ENCODE measurements at regions of chr15 and their contacts with region 1.

Region 1: DNA sequence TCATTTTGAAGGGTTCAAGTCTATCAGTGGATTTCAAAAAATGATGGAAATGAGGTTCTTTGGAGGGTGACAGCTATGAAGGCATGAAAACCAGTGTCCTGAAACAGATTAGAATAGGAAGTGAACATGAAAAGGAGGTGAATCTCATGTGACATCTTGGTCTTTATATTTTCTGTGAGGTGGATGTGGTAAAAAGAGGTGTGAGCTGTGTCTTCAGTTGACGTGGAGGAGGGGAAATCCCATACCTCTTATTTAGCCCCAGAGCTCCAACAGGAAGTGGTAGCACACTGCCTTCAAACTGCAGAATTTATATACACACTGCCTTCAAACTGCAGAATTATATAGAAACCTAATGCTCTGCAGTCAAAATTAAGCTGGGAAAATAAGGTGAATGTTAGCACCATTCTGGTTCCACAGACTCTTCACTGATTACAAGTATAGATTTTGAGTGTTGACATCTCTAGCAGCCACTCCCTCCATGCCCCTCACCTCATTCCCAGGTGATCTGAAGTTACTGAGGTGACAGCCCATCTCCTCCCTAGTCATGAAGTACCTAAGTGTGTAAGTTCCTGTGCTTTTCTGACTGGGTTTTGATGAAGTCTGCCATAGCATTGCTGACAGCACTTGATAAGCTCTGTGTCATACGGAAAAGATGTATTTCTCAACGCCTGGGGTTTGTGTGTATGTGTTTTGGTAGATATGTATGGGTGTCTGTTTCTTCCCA is 2.7 kb downstream of the RAB8B start:
- H3K4me3 Mint-ChIP-seq: peak overlapping the region; percentile 23
- H3K27ac Mint-ChIP-seq: peak overlapping the region; percentile 90
- H3K4me1 Mint-ChIP-seq: peaks cover 56% of the 10 kb centered on the region
- H3K27me3 Mint-ChIP-seq: no peaks in the 10 kb centered on the region

Region 2: DNA sequence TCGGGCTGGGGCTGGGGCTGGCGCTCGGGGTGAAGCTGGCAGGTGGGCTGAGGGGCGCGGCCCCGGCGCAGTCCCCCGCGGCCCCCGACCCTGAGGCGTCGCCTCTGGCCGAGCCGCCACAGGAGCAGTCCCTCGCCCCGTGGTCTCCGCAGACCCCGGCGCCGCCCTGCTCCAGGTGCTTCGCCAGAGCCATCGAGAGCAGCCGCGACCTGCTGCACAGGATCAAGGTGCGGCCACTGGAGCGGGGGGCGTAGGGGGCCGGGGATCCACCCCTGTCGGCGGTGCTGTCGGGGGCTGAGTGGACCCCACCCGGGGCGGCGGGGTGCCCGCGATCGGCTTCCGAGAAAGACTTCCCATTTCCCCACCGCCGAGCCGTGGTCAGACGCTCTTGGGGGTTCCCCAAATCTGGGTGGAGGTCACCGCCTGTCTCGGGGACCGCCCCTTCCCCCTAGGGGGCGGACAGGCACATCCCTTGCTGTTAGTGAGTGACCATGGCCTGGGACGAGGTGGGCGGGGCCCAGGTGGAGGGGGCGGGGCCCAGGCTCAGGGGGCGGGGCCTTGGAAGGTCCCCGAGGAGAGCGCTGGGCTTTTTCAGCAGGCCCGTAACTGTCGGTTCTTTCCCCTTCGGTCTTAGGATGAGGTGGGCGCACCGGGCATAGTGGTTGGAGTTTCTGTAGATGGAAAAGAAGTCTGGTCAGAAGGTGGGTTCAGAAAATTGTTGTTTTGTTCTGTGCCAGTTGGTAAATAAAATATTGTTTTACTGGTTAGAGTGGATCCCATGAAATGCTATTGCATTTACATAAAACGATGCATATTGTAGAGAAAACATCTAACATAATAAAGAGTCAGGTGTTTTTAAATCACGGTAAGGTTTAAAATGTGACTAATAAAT is 69.8 kb before region 1 on chr15:
- intact Hi-C with region 1: loop called (anchors 2 kb)
- H3K4me3 Mint-ChIP-seq: peak overlapping the region; percentile 80
- H3K27ac Mint-ChIP-seq: peak overlapping the region; percentile 83
- H3K4me1 Mint-ChIP-seq: peaks cover 35% of the 10 kb centered on the region
- H3K27me3 Mint-ChIP-seq: no peaks in the 10 kb centered on the region

Region 3: GRCh38 chr15:63157118-63157843 is 34.8 kb before region 1 on chr15 and contains the start of gene RPS27L:
- intact Hi-C with region 1: loop called (anchors 5 kb)
- H3K4me3 Mint-ChIP-seq: peak within 1 kb of the TSS; percentile 94
- H3K27ac Mint-ChIP-seq: peak within 1 kb of the TSS; percentile 96
- H3K4me1 Mint-ChIP-seq: peaks cover 10% of the 10 kb centered on the region
- H3K27me3 Mint-ChIP-seq: no peaks in the 10 kb centered on the region

Region 4: DNA sequence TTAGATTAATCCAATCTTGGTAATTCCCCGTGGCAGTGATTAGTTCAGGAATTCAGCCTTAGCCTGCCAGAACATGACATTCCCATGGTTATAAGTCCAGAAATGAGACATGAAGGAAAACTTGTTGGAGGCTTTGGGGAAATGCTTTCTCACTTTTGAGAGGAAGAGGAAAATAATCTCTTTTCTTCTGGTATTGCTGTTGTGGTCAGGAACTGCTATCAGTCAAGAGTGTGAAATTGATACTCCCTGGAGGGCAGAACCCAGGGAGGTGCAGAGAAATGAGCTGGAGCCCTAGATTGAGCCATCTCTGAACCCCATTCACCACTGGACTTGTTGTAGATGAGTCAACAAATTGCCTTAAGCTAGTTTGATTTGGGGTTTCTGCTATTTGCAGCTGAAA is 46.7 kb after region 1 on chr15:
- intact Hi-C with region 1: loop called (anchors 5 kb)
- H3K4me3 Mint-ChIP-seq: no peak overlapping the region
- H3K27ac Mint-ChIP-seq: no peak overlapping the region
- H3K4me1 Mint-ChIP-seq: peaks cover 52% of the 10 kb centered on the region
- H3K27me3 Mint-ChIP-seq: no peaks in the 10 kb centered on the region

Region 5: DNA sequence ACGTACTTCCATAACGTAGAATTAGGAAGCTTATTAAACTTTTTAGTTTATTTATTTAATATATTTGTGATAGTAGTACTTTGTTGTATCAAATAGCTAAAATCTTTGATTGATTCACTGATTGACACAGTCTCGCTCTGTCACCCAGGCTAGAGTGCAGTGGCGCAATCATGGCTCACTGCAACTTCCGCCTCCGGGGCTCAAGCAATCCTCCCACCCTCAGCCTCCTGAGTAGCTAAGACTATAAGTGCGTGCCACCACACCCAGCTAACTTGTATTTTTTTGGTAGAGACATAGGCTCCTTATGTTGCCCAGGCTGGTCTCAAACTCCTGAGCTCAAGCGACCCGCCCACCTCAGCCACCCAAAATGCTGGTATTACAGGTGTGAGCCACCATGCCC is 91.1 kb after region 1 on chr15:
- intact Hi-C with region 1: loop called (anchors 5 kb)
- H3K4me3 Mint-ChIP-seq: no peak overlapping the region
- H3K27ac Mint-ChIP-seq: peak overlapping the region; percentile 92
- H3K4me1 Mint-ChIP-seq: peaks cover 36% of the 10 kb centered on the region
- H3K27me3 Mint-ChIP-seq: no peaks in the 10 kb centered on the region

Region 6: DNA sequence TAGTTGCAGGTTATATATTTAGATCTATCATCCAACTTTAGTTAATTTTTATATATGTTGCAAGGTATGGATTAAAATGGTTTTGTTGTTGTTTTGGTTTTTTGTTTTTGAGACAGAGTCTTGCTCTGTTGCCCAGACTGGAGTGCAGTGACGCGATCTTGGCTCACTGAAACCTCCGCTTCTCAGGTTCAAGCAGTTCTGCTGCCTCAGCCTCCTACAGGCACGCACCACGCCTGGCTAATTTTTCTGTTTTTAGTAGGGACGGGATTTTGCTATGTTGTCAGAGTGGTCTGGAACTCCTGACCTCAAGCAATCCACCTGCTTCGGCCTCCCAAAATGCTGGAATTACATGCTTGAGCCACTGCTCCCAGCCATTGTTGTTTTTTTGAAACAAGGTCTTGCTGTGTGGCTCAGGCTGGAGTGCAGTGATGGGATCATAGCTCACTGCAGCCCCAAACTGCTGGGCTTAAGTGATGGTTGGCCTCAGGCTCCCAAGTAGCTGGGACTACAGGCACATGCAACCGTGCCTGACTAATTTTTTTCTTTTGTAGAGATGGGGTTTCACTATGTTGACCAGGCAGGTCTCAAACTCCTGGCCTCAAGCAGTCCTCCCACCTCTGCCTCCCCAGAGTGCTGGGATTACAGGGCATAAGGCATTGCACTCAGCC is 1360.4 kb after region 1 on chr15:
- intact Hi-C with region 1: no loop called
- H3K4me3 Mint-ChIP-seq: no peak overlapping the region
- H3K27ac Mint-ChIP-seq: no peak overlapping the region
- H3K4me1 Mint-ChIP-seq: peaks cover 11% of the 10 kb centered on the region
- H3K27me3 Mint-ChIP-seq: no peaks in the 10 kb centered on the region

Measured in dendritic cell treated with granulocyte-macrophage colony-stimulating factor and Interleukin-4, amounts not matched to agents 40 ng/mL and 50 ng/mL, for 4 days (primary cell).